ENCODE measurements at regions of chr15 and their contacts with region 1.

Region 1: GRCh38 chr15:66789029-66790025 is 87.3 kb downstream of the SMAD6 start:
- DNase-seq: no peak
- H3K4me3 ChIP-seq: no peak overlapping the region
- H3K27me3 ChIP-seq: no peaks in the 10 kb centered on the region
- CTCF ChIP-seq: peak; percentile 68

Region 2: GRCh38 chr15:65723876-65724275 is 1065.5 kb before region 1 on chr15:
- CTCF ChIA-PET with region 1: no interaction called
- POLR2A ChIA-PET with region 1: no interaction called
- DNase-seq: no peak
- H3K4me3 ChIP-seq: no peak overlapping the region
- H3K27me3 ChIP-seq: no peaks in the 10 kb centered on the region
- CTCF ChIP-seq: no peak

Region 3: DNA sequence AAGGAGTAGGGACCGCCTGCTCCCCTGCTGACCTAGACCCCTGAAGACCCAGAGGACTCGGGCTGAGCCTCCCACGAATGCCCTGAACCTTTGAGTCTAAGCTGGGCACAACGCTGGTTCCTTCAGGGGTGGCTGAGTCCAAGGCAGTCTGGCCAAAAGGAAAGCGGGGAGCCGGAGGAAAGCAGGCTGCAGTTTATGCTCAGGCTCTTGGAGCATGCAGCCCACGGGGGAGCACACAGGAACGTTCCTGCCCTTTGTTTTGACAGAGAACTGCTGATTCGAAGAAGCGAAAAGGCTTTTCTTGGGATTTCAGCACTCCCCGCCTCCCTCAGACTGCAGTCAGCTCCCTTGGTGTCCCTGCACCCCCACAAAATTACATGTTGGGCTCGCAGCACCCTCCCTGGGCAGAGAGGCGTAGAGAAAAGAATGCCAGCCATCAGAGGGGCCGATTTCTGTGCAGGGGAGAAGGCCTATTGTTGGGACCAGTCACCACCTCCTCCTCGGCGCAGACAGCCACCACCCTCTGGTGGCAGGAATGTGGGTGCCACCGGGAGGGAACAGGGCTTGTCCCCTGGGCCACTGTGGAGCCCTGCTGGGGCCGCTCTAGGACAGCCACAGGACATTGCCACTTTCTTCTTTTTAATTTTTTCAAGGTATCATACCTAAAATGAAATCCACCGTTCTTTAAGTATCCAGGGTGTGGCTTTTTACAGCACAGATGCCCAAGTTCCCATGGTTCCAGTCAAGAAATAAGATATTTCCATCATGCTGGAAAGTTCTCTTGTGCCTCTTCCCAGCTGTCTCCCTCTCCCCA is 15.1 kb before region 1 on chr15:
- CTCF ChIA-PET with region 1: interaction called, 33 read pairs
- POLR2A ChIA-PET with region 1: no interaction called
- DNase-seq: no peak
- H3K4me3 ChIP-seq: no peak overlapping the region
- H3K27me3 ChIP-seq: no peaks in the 10 kb centered on the region
- CTCF ChIP-seq: peak; percentile 95

Region 4: DNA sequence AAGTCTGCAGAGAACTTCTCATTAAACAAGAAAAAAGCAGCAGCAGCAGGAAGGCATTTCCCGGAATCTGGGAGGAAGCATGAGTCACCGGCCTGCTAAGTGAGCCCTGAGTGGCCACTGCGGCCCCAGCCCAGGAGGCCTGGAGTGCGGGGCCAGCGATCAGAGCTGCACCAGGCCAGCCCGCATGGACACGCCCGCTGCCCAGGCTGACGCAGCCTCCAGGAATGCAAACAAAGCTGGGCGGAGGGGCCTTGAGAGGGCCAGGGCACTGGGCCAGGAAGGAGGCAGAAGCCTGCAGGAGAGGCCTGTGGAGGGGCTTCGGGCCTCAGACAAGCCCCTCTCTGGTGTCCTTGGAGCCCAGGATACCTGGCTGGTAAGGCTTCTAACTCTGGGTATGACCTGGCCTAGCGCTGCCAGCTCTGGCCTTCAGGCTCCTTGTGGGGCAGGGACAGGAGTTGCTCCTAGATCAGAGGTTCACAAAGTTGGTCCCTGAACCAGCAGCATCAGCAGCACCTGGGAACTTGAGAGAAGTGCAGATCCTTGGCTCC is 13.9 kb after region 1 on chr15:
- CTCF ChIA-PET with region 1: interaction called, 23 read pairs
- POLR2A ChIA-PET with region 1: no interaction called
- DNase-seq: peak; percentile 91
- H3K4me3 ChIP-seq: no peak overlapping the region
- H3K27me3 ChIP-seq: no peaks in the 10 kb centered on the region
- CTCF ChIP-seq: no peak